ENCODE measurements at regions of chr11 and their contacts with region 1.

Region 1: GRCh38 chr11:10455637-10456487 is 798 bp downstream of the AMPD3 start:
- DNase-seq: peak; percentile 78 to 93 (median 87)
- H3K4me3 ChIP-seq: peak overlapping the region; percentile 41 to 86 (median 72)
- H3K27ac ChIP-seq: peak overlapping the region; percentile 52 to 86
- H3K4me1 ChIP-seq: peaks cover 34 to 75% (median 64%) of the 10 kb centered on the region in 4 experiments
- H3K27me3 ChIP-seq: no peaks in the 10 kb centered on the region

Region 2: GRCh38 chr11:10436224-10436623 is 19.6 kb before region 1 on chr11:
- CTCF ChIA-PET with region 1: interaction called, 32 read pairs
- POLR2A ChIA-PET with region 1: no interaction called
- DNase-seq: peak in 2 of 3 donors; percentile 67 to 75
- H3K4me3 ChIP-seq: peak overlapping the region in 1 of 7 experiments; percentile 24
- H3K27ac ChIP-seq: no peak overlapping the region
- H3K4me1 ChIP-seq: peaks cover 7 to 28% (median 13%) of the 10 kb centered on the region in 4 experiments
- H3K27me3 ChIP-seq: no peaks in the 10 kb centered on the region

Region 3: GRCh38 chr11:10441652-10442503 is 14.0 kb before region 1 on chr11:
- CTCF ChIA-PET with region 1: interaction called, 32 read pairs
- POLR2A ChIA-PET with region 1: interaction called, 4 read pairs
- DNase-seq: peak in 2 of 3 donors; percentile 52 to 53
- H3K4me3 ChIP-seq: no peak overlapping the region
- H3K27ac ChIP-seq: peak overlapping the region in 1 of 2 experiments; percentile 47
- H3K4me1 ChIP-seq: peaks cover 9 to 55% (median 22%) of the 10 kb centered on the region in 4 experiments
- H3K27me3 ChIP-seq: no peaks in the 10 kb centered on the region

Region 4: GRCh38 chr11:10628508-10629236 is 172.8 kb after region 1 on chr11:
- CTCF ChIA-PET with region 1: no interaction called
- POLR2A ChIA-PET with region 1: no interaction called
- DNase-seq: peak in 1 of 3 donors; percentile 33
- H3K4me3 ChIP-seq: no peak overlapping the region
- H3K27ac ChIP-seq: no peak overlapping the region
- H3K4me1 ChIP-seq: peaks cover 0 to 26% (median 23%) of the 10 kb centered on the region in 4 experiments
- H3K27me3 ChIP-seq: no peaks in the 10 kb centered on the region